Aorta (tissue), 5 donors: ENCODE measurements at regions of chr7 and their contacts with region 1.

Region 1: DNA sequence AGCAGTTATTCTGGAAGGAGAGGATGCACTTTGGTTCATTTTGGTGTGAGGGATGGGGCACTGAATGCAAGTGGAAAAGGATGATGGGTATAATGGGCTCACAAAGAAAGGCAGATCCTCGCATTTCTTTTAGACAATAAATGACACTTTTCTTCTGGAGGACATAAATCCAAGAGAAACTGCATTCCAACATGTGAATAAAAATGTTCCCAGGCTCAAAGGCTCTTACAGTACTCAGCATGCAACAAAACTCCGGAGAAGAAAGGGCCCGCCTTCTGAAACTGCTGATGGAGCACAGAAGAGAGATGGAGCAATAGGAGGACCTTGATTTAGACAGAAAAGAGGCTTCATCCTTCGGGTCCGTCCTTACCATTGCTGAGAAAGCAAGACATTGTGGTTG is 538.2 kb upstream of the DPP6 start:
- DNase-seq: no peak
- ATAC-seq: no peak
- H3K4me3 ChIP-seq: no peak overlapping the region
- H3K27ac ChIP-seq: no peak overlapping the region
- H3K4me1 ChIP-seq: no peaks in the 10 kb centered on the region
- H3K27me3 ChIP-seq: peaks cover 0 to 2% of the 10 kb centered on the region in 2 donors

Region 2: DNA sequence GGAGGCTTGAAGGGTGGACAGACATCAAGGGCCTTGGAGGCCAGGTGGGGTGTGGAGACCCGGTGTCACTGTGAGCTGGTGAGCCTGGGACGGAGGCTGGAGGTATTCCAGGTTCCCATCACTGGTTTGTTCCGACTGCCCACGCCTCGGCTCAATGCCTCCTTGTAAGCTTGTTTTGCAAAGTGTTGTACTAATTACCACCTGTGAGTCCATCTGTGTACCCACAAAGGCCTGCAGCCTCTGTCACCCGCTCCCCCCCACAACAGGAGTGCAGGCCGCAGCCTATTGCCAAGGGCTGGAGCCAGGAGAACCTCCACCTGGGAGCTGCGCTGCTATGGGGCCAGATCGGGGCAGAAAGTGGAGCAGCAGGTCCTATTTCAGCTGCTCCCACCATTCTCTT is 16.4 kb after region 1 on chr7:
- intact Hi-C with region 1: loop called in 1 of 2 experiments (anchors 2 kb)
- DNase-seq: no peak
- ATAC-seq: no peak
- H3K4me3 ChIP-seq: no peak overlapping the region
- H3K27ac ChIP-seq: no peak overlapping the region
- H3K4me1 ChIP-seq: no peaks in the 10 kb centered on the region
- H3K27me3 ChIP-seq: no peaks in the 10 kb centered on the region